ENCODE measurements at regions of chr1 and their contacts with region 1.

Region 1: GRCh38 chr1:14923727-14924452 is 229.7 kb upstream of the TMEM51 start:
- DNase-seq: peak; percentile 53
- H3K4me3 ChIP-seq: peak overlapping the region in 2 of 3 experiments; percentile 81 to 82
- H3K27ac ChIP-seq: no peak overlapping the region
- H3K4me1 ChIP-seq: peaks cover 22% of the 10 kb centered on the region
- H3K27me3 ChIP-seq: no peaks in the 10 kb centered on the region
- CTCF ChIP-seq: no peak

Region 2: DNA sequence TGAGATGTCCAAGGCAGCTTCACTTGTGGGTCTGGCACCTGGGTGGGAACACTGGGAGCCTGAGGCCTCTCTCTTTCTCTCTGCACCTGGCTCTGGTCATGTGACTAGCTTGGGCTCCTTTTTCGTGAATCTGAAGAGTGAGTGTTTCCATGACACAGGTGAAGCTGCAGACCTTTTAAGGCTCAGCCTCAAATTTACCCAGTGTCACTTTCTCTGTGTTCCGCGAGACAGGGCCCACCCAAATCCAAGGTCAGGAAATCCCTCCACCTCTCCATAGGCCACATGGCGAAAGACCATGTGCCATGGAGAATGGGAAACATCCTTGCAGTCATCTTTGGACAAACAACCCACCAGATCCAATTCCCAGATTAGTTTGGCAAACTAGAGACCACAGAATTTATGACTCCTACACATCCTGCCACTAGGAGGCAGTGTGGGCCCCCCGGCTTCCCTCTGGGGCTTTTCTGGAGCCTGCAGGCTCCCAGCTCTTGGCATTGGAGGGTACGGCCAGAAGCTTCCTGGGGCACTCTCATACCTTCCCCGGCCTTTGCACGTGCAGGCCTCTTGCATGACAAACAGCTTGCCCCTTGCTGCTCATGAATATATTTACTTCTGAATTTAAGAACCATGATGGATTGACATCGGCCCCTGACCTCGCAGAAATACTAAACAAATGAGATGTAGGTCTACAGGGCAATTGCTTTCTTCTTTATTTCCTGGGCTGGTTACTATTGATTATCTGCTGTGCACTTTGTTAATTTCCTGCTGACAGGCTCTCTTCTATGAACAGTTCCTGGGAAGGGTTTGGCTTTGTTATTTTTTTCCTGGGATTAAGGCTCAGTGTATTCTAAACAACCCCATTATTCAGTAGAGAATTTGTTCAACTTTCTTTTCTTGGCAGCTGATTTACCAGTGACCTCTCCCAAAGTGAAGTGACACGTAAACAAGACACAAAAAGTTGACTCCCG is 144.7 kb before region 1 on chr1:
- CTCF ChIA-PET with region 1: no interaction called
- dilution Hi-C with region 1: no loop called
- in situ Hi-C with region 1: no loop called
- intact Hi-C with region 1: loop called (anchors 5 kb)
- DNase-seq: no peak
- H3K4me3 ChIP-seq: no peak overlapping the region
- H3K27ac ChIP-seq: no peak overlapping the region
- H3K4me1 ChIP-seq: no peaks in the 10 kb centered on the region
- H3K27me3 ChIP-seq: no peaks in the 10 kb centered on the region
- CTCF ChIP-seq: peak; percentile 72 to 78

Region 3: GRCh38 chr1:14945132-14946016 is 21.5 kb after region 1 on chr1:
- CTCF ChIA-PET with region 1: no interaction called
- dilution Hi-C with region 1: no loop called
- in situ Hi-C with region 1: no loop called
- intact Hi-C with region 1: loop called (anchors 2 kb)
- DNase-seq: peak; percentile 36
- H3K4me3 ChIP-seq: no peak overlapping the region
- H3K27ac ChIP-seq: peak overlapping the region; percentile 45
- H3K4me1 ChIP-seq: peaks cover 21% of the 10 kb centered on the region
- H3K27me3 ChIP-seq: no peaks in the 10 kb centered on the region
- CTCF ChIP-seq: no peak

Region 4: GRCh38 chr1:14970115-14970798 is 46.4 kb after region 1 on chr1:
- CTCF ChIA-PET with region 1: no interaction called
- dilution Hi-C with region 1: no loop called
- in situ Hi-C with region 1: no loop called
- intact Hi-C with region 1: no loop called
- DNase-seq: peak; percentile 80
- H3K4me3 ChIP-seq: no peak overlapping the region
- H3K27ac ChIP-seq: peak overlapping the region; percentile 11
- H3K4me1 ChIP-seq: peaks cover 35% of the 10 kb centered on the region
- H3K27me3 ChIP-seq: no peaks in the 10 kb centered on the region
- CTCF ChIP-seq: no peak

Measured in mammary epithelial cell (primary cell).